ENCODE measurements at regions of chr10 and their contacts with region 1.

Region 1: GRCh38 chr10:31318854-31319601 is at the start of gene ZEB1:
- DNase-seq: peak; percentile 97
- H3K4me3 ChIP-seq: peak within 1 kb of the TSS; percentile 97
- H3K27ac ChIP-seq: peak within 1 kb of the TSS; percentile 94
- H3K4me1 ChIP-seq: peaks cover 32% of the 10 kb centered on the region
- CTCF ChIP-seq: peak; percentile 35; the same call in 1 of the 2 replicates
- total RNA-seq, gene ZEB1: 27.6 and 33.2 TPM in 2 replicates

Region 2: GRCh38 chr10:31031558-31032257 is 287.3 kb before region 1 on chr10 and contains the start of gene ZNF438:
- CTCF ChIA-PET with region 1: no interaction called
- POLR2A ChIA-PET with region 1: interaction called, 3 read pairs
- intact Hi-C with region 1: loop called (anchors 1 kb)
- DNase-seq: peak; percentile 92
- H3K4me3 ChIP-seq: peak within 1 kb of the TSS; percentile 74
- H3K27ac ChIP-seq: peak within 1 kb of the TSS; percentile 80
- H3K4me1 ChIP-seq: peaks cover 8% of the 10 kb centered on the region
- CTCF ChIP-seq: peak; percentile 75
- total RNA-seq, gene ZNF438: 1.3 and 2.0 TPM in 2 replicates

Region 3: GRCh38 chr10:31490858-31491504 is 172.0 kb after region 1 on chr10:
- CTCF ChIA-PET with region 1: no interaction called
- POLR2A ChIA-PET with region 1: no interaction called
- intact Hi-C with region 1: loop called (anchors 10 kb)
- DNase-seq: peak; percentile 36
- H3K4me3 ChIP-seq: no peak overlapping the region
- H3K27ac ChIP-seq: no peak overlapping the region
- H3K4me1 ChIP-seq: no peaks in the 10 kb centered on the region
- CTCF ChIP-seq: peak; percentile 81

Region 4: DNA sequence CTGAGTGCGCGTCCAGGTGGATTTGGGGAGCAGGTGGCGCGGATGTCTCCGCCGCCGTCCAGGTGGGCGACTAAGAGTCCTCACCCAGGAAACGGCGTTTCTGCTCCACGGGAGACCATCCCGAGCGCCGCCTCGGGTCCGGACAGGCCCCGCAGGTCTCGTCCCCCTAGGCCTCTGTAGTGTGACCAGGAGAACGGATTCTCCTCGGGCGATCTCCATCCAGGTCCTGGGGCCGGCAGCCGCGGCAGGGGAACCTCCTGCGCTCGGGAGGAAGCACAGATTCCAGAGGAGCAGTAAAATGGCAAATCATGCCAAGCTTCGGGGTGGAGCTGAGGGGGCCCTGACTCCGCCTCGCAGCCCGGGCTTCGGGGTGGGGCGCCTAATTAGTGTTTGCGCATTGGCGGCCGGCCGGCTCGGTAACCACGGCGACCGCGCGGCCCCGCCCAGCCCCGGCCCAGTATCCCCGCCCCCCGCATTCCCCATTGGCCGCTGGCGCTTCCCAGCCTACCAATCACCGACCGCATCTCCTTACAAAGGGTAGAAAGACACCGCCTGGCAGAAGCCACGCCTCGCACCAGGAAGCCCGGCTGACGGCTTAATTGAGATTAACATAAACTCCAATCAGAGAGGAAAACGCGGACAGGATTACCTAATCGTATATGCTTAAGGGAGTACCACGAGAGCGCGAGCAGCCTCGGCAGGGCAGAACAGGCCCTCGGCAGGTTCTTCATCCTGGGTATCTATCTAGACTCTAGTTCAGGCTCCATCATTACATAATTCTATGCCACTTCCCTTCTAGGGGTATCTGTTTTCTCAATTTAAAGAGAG is 441.0 kb after region 1 on chr10:
- CTCF ChIA-PET with region 1: no interaction called
- POLR2A ChIA-PET with region 1: no interaction called
- intact Hi-C with region 1: loop called (anchors 5 kb)
- DNase-seq: peak; percentile 98
- H3K4me3 ChIP-seq: peak overlapping the region; percentile 80
- H3K27ac ChIP-seq: peak overlapping the region; percentile 42
- H3K4me1 ChIP-seq: peaks cover 8% of the 10 kb centered on the region
- CTCF ChIP-seq: no peak

Region 5: GRCh38 chr10:31770307-31770902 is 451.4 kb after region 1 on chr10:
- CTCF ChIA-PET with region 1: no interaction called
- POLR2A ChIA-PET with region 1: no interaction called
- intact Hi-C with region 1: loop called (anchors 5 kb)
- DNase-seq: peak; percentile 47
- H3K4me3 ChIP-seq: no peak overlapping the region
- H3K27ac ChIP-seq: no peak overlapping the region
- H3K4me1 ChIP-seq: no peaks in the 10 kb centered on the region
- CTCF ChIP-seq: peak; percentile 88

Region 6: GRCh38 chr10:32055813-32056600 is 737.0 kb after region 1 on chr10 and contains the start of gene KIF5B:
- CTCF ChIA-PET with region 1: no interaction called
- POLR2A ChIA-PET with region 1: no interaction called
- intact Hi-C with region 1: loop called (anchors 2 kb)
- DNase-seq: peak; percentile 92
- H3K4me3 ChIP-seq: peak within 1 kb of the TSS; percentile 87
- H3K27ac ChIP-seq: peak within 1 kb of the TSS; percentile 78
- H3K4me1 ChIP-seq: peaks cover 37% of the 10 kb centered on the region
- CTCF ChIP-seq: no peak
- total RNA-seq, gene KIF5B: 63.8 and 73.8 TPM in 2 replicates